ENCODE measurements at regions of chr17 and their contacts with region 1.

Region 1: DNA sequence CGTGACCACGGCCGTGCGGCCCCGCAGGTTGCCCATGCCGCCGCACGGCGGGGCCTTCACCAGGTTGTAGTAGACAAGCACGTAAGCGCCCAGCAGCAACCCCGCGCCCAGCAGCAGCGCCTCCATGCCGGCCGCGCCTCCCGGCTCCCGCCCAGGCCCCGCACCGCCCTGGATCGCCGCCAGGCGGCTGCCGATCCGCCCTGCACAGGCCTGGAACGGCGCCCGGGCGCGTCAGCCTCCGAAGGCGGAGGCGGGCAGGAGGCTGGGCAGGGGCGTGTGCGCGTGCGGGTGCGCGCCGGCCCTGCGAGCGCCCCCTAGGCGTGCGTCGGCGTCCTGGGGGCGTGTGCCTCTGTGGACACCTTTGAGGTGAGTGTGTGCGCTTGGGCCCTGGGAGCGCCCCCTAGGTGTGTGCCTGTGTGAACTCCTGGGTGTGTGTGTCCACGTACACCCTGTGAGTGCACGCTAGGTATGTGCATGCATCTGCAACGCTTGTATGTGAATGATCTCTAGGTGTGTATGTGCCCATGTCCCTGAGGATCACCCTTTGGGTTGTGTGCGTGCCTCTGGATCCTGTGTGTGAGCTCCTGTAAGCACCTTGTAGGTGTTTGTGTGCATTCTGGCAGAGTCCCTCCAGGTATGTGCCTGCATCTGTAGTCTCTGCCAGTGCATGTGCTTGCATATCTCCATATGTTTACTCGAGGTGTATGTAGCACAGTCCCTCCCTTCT is at the start of gene DHRS13:
- DNase-seq: peak; percentile 91
- H3K4me3 Mint-ChIP-seq: peak within 1 kb of the TSS; percentile 90
- H3K27ac Mint-ChIP-seq: peak within 1 kb of the TSS; percentile 86
- H3K4me1 Mint-ChIP-seq: peaks cover 32% of the 10 kb centered on the region
- H3K27me3 Mint-ChIP-seq: no peaks in the 10 kb centered on the region
- total RNA-seq, gene DHRS13: 30.6 and 32.9 TPM in 2 replicates

Region 2: GRCh38 chr17:28763804-28764266 is 139.1 kb before region 1 on chr17:
- intact Hi-C with region 1: loop called (anchors 2 kb)
- DNase-seq: peak; percentile 60
- H3K4me3 Mint-ChIP-seq: no peak overlapping the region
- H3K27ac Mint-ChIP-seq: no peak overlapping the region
- H3K4me1 Mint-ChIP-seq: peaks cover 13% of the 10 kb centered on the region
- H3K27me3 Mint-ChIP-seq: no peaks in the 10 kb centered on the region

Region 3: DNA sequence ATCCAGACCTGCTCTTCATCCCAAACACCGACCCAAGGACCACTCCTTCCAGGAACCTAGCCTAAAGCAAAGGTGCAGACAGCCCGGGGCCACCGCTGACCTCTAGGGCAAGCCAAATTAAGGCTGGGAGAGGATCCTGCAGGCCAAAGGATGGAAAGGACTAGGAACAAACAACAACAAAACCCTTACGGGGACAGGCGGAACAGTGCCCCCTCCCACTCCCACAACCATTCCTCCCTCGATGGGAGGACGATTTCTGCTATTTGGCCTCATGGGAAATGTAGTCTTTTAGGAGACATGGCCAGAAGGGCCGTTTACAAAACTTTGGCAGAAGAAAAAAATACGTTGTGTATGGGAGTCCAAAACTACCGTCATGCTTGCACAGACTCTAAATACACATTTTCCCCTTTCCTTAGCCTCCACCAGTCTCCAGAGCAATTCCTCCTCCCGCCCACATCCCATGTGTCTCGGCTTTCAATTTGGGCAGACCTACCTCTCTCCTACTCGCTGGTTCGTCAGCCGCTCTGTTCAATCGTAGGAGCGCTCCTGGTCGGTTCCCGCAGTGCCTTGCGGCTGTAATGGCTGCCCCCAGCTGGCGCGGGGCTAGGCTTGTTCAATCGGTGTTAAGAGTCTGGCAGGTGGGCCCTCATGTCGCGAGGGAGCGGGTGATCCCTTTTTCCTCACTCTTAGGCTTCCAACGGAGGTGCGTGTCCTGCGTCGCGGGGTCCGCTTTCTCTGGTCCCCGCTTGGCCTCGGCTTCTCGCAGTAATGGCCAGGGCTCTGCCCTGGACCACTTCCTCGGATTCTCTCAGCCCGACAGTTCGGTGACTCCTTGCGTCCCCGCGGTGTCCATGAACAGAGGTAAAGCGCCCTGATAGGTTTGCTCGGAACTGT is 48.3 kb before region 1 on chr17 and contains the start of gene ERAL1:
- intact Hi-C with region 1: loop called (anchors 2 kb)
- DNase-seq: peak; percentile 81
- H3K4me3 Mint-ChIP-seq: peak within 1 kb of the TSS; percentile 86
- H3K27ac Mint-ChIP-seq: peak within 1 kb of the TSS; percentile 89
- H3K4me1 Mint-ChIP-seq: peaks cover 24% of the 10 kb centered on the region
- H3K27me3 Mint-ChIP-seq: no peaks in the 10 kb centered on the region
- total RNA-seq, gene ERAL1: 54.5 and 60.4 TPM in 2 replicates

Region 4: DNA sequence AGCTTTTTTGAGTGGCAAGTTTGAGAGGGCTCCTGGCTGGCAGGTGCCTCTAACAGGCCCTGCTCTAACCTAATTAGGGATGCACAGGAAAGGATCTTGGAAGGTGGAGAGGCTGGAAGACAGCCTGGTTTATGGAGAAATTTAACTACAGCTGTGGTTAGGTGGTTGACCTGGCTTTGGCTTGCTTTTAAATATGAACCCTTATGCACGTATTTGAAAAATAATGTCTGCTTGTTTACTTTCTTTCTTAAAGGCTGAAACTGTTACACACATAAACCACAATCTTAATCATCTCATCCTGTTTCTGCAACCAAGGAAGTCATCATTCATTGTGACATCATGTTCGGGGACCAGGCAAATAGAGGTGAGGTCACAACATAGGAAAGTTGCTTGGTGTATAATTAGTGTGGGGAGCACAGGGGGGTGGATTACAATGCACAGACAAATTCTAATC is 23.0 kb after region 1 on chr17:
- intact Hi-C with region 1: loop called (anchors 2 kb)
- DNase-seq: peak; percentile 59
- H3K4me3 Mint-ChIP-seq: peak overlapping the region; percentile 26
- H3K27ac Mint-ChIP-seq: peak overlapping the region; percentile 73
- H3K4me1 Mint-ChIP-seq: peaks cover 49% of the 10 kb centered on the region
- H3K27me3 Mint-ChIP-seq: no peaks in the 10 kb centered on the region

Region 5: GRCh38 chr17:28951991-28952975 is 49.3 kb after region 1 on chr17:
- intact Hi-C with region 1: loop called (anchors 2 kb)
- DNase-seq: peak; percentile 95
- H3K4me3 Mint-ChIP-seq: no peak overlapping the region
- H3K27ac Mint-ChIP-seq: no peak overlapping the region
- H3K4me1 Mint-ChIP-seq: peaks cover 9% of the 10 kb centered on the region
- H3K27me3 Mint-ChIP-seq: no peaks in the 10 kb centered on the region

Measured in activated T-helper 2 cell treated with anti-CD3 and anti-CD28 coated beads, Interferon-gamma antibody, Interleukin-2, Interleukin-4, amounts not matched to agents 10 μg/mL and 5 μg/mL and 100 μg/mL, durations not matched to agents 14 hours and 24 hours and 36 hours (primary cell).